Activated CD4-positive, alpha-beta T cell treated with anti-CD3 and anti-CD28 coated beads for 36 hours (primary cell): ENCODE measurements at regions of chr10 and their contacts with region 1.

Region 1: DNA sequence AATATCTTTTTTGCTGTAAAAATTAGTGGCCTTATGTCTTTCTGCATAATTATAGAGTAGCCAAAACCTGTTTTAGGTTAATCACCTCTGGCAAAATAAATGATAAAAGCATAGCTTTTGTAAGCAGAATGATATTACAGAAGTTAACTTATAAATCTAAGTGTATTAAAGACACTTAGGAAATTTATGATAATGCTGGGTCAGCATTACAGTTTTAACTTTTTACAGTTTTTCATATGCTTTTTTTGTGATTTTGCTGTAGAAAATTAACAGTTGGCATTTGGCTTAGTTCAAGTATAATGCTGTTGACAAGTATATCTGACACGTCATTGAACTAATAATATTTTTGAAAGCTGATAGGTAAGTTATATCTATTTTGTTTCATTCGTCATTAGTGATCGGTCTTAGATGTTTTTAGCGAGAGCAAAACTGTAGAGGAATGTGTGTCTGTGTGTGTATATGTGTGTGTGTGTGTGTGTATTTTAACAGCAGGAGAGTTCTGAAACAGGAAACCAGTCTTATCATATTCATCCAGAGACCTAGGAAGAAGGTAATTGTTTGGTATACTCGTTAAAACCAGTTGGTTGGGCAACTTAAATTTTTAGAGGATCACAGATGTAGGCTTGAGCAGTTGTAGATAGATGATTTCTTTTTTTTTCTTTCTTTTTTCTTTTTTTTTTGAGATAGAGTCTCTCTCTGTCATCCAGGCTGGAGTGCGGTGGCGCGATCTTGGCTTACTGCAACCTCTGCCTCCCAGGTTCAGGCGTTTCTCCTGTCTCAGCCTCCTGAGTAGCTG is 15.4 kb downstream of the PTEN start:
- DNase-seq: no peak
- ATAC-seq: no peak
- H3K4me3 Mint-ChIP-seq: no peak overlapping the region
- H3K27ac Mint-ChIP-seq: no peak overlapping the region
- H3K4me1 Mint-ChIP-seq: peaks cover 41% of the 10 kb centered on the region
- H3K27me3 Mint-ChIP-seq: no peaks in the 10 kb centered on the region

Region 2: GRCh38 chr10:87058171-87058570 is 820.7 kb before region 1 on chr10:
- CTCF ChIA-PET with region 1: no interaction called
- POLR2A ChIA-PET with region 1: no interaction called
- intact Hi-C with region 1: no loop called
- DNase-seq: no peak
- ATAC-seq: no peak
- H3K4me3 Mint-ChIP-seq: no peak overlapping the region
- H3K27ac Mint-ChIP-seq: no peak overlapping the region
- H3K4me1 Mint-ChIP-seq: no peaks in the 10 kb centered on the region
- H3K27me3 Mint-ChIP-seq: no peaks in the 10 kb centered on the region

Region 3: DNA sequence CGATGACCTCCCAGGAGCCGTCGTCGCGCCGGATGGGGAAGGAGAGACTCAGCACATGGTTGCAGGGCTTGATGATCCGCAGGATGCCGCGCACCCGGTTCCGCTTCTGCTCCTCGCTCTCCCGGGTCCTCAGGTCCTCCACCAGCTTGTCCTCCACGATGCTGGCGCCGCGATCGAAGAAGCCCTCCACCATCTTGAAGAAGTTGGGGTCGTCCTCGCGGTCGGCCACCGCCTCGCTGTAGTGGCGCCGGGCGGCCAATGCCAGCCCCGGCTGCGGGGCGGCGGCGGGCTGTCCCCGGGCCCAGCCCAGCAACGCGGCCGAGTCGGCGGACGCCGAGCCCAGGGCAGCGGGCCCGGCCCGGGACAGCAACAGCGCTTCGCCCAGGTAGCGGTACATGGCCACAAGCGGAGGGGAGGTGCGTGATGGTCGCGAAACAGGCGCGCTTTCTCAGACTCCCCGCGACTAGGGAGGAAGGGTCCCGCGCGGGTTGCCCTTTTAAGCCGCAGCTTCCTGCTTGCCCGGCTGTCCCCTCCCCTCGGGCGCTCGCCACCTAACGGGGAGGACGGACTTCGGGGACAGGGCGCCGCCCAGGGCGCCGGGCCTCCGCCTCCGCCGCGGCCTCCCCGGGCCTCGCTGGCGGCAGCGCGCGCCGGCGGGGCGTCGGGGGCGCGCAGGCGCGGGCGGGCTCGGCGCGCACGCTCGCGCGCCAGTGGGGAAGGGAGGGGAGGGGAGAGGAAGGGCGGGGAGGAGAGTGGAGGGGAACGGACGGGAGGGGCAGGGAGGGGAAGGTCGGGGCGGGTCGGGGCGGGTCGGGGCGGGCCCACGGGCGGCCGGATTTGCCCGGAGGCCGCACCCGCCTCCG is 784.3 kb before region 1 on chr10 and contains the starts of genes GLUD1 and SHLD2:
- CTCF ChIA-PET with region 1: no interaction called
- POLR2A ChIA-PET with region 1: no interaction called
- intact Hi-C with region 1: no loop called
- DNase-seq: peak; percentile 94
- ATAC-seq: peak; percentile 80
- H3K4me3 Mint-ChIP-seq: peak within 1 kb of the TSS; percentile 85
- H3K27ac Mint-ChIP-seq: peak within 1 kb of the TSS; percentile 91
- H3K4me1 Mint-ChIP-seq: peaks cover 34% of the 10 kb centered on the region
- H3K27me3 Mint-ChIP-seq: no peaks in the 10 kb centered on the region
- total RNA-seq, gene GLUD1: 98.4 to 125 TPM
- total RNA-seq, gene SHLD2: 29.7 to 29.9 TPM

Region 4: DNA sequence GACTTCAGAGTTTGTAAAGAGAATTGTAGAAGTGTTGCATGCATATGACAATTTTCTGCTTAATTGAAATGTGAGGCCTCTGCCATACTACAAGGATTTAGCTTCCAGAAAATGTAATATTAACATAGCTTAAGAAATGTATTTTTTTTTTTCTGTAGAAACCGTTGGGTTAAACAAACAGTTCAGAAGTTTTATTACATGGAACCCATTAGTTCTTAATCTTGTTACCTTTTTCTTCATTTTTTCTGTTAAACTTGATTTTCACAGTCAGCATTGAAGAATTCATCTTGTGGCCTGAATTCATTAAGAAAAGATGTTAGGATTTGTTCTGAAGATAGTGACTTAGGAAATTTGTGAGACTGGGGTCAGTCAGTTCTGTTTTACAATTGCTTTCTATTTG is 10.6 kb before region 1 on chr10:
- CTCF ChIA-PET with region 1: interaction called, 4 read pairs
- POLR2A ChIA-PET with region 1: interaction called, 3 read pairs
- intact Hi-C with region 1: loop called in 1 of 2 experiments (anchors 2 kb)
- DNase-seq: no peak
- ATAC-seq: no peak
- H3K4me3 Mint-ChIP-seq: peak overlapping the region; percentile 34
- H3K27ac Mint-ChIP-seq: no peak overlapping the region
- H3K4me1 Mint-ChIP-seq: peaks cover 54% of the 10 kb centered on the region
- H3K27me3 Mint-ChIP-seq: no peaks in the 10 kb centered on the region

Region 5: DNA sequence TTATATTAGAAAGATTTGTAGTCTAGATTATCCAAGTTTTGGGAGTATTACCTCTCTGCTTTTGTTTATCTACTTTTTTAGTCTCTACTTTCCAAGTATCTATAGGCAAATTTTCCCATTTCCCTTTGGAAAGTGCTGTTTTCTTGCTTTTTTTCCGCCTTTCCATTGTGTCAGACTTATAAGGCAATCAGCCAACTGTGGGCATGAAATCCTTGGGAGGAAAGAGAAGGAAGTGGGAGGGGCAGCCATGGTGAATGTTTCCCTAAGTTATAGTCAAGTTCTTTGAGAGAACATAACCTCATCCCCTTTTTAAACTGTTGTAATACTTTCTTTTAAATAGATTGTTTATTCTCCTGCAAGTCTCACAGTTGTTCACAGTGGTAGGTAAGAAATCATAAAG is 37.1 kb after region 1 on chr10:
- CTCF ChIA-PET with region 1: interaction called, 3 read pairs
- POLR2A ChIA-PET with region 1: no interaction called
- intact Hi-C with region 1: loop called in 1 of 2 experiments (anchors 5 kb)
- DNase-seq: no peak
- ATAC-seq: no peak
- H3K4me3 Mint-ChIP-seq: no peak overlapping the region
- H3K27ac Mint-ChIP-seq: no peak overlapping the region
- H3K4me1 Mint-ChIP-seq: peaks cover 51% of the 10 kb centered on the region
- H3K27me3 Mint-ChIP-seq: no peaks in the 10 kb centered on the region